ENCODE measurements at regions of chr12 and their contacts with region 1.

Region 1: GRCh38 chr12:123094349-123095074 is 56.4 kb downstream of the PITPNM2 start:
- DNase-seq: no peak
- H3K4me3 Mint-ChIP-seq: no peak overlapping the region
- H3K27ac Mint-ChIP-seq: no peak overlapping the region
- H3K4me1 Mint-ChIP-seq: peaks cover 6% of the 10 kb centered on the region
- H3K27me3 Mint-ChIP-seq: peaks cover 2% of the 10 kb centered on the region

Region 2: DNA sequence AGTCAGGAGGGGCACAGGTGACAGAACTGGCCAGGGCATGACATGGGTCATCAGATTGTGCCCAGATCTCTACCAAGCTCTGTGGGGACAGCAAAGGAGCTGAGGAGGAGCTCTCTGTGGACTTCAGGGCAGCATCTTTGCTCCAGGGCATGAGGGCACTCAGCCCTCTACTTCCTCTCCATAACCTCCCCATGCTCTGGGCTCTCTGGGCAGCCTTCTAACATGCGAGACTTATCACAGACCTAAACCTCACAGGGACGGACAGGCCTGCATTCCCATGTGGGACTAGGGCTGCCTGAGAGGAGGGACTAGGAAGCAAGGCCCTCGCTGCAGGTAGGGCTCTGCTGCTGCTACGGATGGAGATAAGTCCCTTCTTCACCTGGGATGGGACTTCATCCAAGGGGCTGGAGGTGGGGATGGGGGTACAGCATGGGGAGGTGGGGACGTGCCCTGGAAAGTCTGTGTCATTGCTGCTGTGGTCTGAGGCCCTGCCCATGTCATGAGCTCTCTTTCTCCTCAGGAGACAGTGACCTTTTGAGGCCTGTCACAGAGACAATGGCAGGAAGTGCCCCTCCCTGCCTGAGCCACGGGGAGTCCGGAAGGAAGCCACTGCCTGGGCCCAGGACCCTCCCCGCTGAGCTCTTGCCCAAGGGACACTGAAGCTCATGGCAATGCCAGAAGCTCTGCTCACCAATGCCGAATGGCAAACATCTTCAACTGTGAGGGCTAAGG is 12.3 kb after region 1 on chr12:
- CTCF ChIA-PET with region 1: interaction called, 4 read pairs
- POLR2A ChIA-PET with region 1: interaction called, 14 read pairs
- DNase-seq: peak; percentile 85
- H3K4me3 Mint-ChIP-seq: peak overlapping the region; percentile 37
- H3K27ac Mint-ChIP-seq: peak overlapping the region; percentile 93
- H3K4me1 Mint-ChIP-seq: peaks cover 39% of the 10 kb centered on the region
- H3K27me3 Mint-ChIP-seq: no peaks in the 10 kb centered on the region